ENCODE measurements at regions of chr22 and their contacts with region 1.

Region 1: GRCh38 chr22:33472462-33473344 is 414.5 kb upstream of the SYN3 start:
- ATAC-seq: peak in 3 of 8 experiments; percentile 34 to 73 (median 70)
- H3K4me3 ChIP-seq: no peak overlapping the region
- H3K27ac ChIP-seq: no peak overlapping the region
- H3K4me1 ChIP-seq: peaks cover 16 to 19% of the 10 kb centered on the region in 2 donors

Region 2: GRCh38 chr22:33418484-33418883 is 54.2 kb before region 1 on chr22:
- in situ Hi-C with region 1: loop called in 1 of 9 experiments (anchors 10 kb)
- ATAC-seq: peak in 1 of 8 experiments; percentile 60
- H3K4me3 ChIP-seq: no peak overlapping the region
- H3K27ac ChIP-seq: no peak overlapping the region
- H3K4me1 ChIP-seq: peaks cover 0 to 4% of the 10 kb centered on the region in 2 donors

Measured in motor neuron (in vitro differentiated cells).